Pancreas (tissue), 10 donors: ENCODE measurements at regions of chr1 and their contacts with region 1.

Region 1: DNA sequence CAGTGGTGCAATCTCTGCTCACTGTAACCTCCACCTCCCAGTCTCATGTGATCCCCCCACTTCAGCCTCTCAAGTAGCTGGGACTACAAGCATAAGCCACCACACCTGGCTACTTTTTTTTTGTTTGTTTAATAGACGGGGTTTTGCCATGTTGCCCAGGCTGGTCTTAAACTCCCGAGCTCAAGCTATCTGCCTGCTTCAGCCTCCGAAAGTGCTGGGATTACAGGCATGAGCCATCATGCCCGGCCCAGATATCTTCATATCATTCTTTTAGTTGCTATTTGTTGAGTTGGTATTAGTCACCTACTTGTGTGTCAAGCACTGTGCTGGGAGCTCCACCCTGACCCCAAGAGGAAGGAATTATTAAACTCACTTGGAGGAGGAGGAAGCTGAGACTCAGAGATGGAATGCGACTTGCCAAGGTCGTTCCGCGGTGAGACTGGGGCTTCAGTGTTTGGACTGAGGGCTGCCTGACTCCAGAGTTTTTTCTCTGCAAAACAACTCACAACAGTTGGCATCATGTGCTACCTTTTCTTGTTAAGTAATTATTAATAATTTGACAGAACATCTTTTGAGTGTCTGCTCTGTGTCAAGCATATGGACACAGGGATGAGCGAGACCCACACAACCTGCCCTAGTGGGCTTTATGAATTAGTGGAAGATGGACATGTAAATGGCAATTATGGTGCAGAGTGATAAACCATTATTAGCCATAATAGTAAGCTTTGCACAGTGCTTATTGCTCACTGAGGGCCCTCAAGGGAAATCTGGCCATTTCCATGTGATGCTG is 132.0 kb downstream of the FOXD2 start:
- DNase-seq: peak in 4 of 6 donors; percentile 44 to 61 (median 52)
- ATAC-seq: peak; percentile 91 to 99 (median 97)
- H3K4me3 ChIP-seq: no peak overlapping the region
- H3K27ac ChIP-seq: no peak overlapping the region
- H3K4me1 ChIP-seq: no peaks in the 10 kb centered on the region
- H3K27me3 ChIP-seq: no peaks in the 10 kb centered on the region
- CTCF ChIP-seq: peak in 2 of 4 donors; percentile 15

Region 2: DNA sequence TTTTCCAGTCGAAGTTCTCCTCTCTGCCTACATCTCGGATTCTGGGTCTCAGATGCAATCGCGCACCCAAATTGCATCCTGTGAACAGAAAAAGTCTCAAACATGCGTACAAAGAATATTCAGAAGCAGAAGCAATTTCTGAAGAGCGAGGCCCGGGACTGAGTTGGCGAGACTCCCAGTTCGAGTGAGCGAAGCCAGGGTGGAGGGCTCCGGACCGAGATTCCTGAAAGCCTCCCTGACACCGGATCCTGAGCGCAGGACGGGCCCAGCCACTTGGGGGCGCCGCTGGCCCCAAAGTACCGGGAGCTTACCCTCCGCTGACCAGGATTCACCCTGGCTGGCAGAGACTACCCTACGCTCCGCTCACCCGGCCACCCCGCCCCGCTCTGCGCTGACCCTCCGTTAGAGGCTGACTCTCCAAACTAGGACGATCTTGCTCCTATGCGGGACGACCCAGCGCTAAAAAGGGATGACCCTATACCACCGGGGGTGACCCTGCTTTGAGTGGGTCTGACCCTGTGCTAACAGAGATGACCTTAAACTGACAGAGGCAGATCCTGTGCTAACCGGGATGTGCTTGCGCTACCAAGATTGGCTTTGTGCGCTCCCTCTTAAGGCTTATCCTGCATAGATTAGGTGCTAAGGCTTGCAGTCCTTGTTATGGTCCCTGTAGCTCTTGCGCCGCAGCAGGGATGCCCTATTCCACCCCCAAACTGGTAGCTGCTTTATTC is 119.9 kb before region 1 on chr1:
- intact Hi-C with region 1: loop called in 1 of 3 experiments (anchors 10 kb)
- DNase-seq: peak in 5 of 6 donors; percentile 21 to 83 (median 63)
- ATAC-seq: peak; percentile 77 to 95 (median 89)
- H3K4me3 ChIP-seq: no peak overlapping the region
- H3K27ac ChIP-seq: no peak overlapping the region
- H3K4me1 ChIP-seq: no peaks in the 10 kb centered on the region
- H3K27me3 ChIP-seq: peaks cover 0 to 24% (median 9%) of the 10 kb centered on the region in 4 donors
- CTCF ChIP-seq: peak in 2 of 4 donors; percentile 26 to 39

Region 3: GRCh38 chr1:47679301-47679791 is 109.5 kb after region 1 on chr1:
- intact Hi-C with region 1: no loop called
- DNase-seq: peak in 1 of 6 donors; percentile 32
- ATAC-seq: peak in 2 of 4 donors; percentile 29 to 34
- H3K4me3 ChIP-seq: no peak overlapping the region
- H3K27ac ChIP-seq: no peak overlapping the region
- H3K4me1 ChIP-seq: no peaks in the 10 kb centered on the region
- H3K27me3 ChIP-seq: no peaks in the 10 kb centered on the region
- CTCF ChIP-seq: no peak